ENCODE measurements at regions of chr16 and their contacts with region 1.

Region 1: GRCh38 chr16:64751906-64752305 is 370.0 kb downstream of the CDH11 start:
- DNase-seq: no peak
- H3K4me3 Mint-ChIP-seq: no peak overlapping the region
- H3K27ac Mint-ChIP-seq: no peak overlapping the region
- H3K4me1 Mint-ChIP-seq: no peaks in the 10 kb centered on the region
- H3K27me3 Mint-ChIP-seq: no peaks in the 10 kb centered on the region

Region 2: GRCh38 chr16:64773184-64773583 is 21.3 kb after region 1 on chr16:
- CTCF ChIA-PET with region 1: no interaction called
- POLR2A ChIA-PET with region 1: no interaction called
- intact Hi-C with region 1: no loop called
- DNase-seq: no peak
- H3K4me3 Mint-ChIP-seq: no peak overlapping the region
- H3K27ac Mint-ChIP-seq: no peak overlapping the region
- H3K4me1 Mint-ChIP-seq: no peaks in the 10 kb centered on the region
- H3K27me3 Mint-ChIP-seq: no peaks in the 10 kb centered on the region

Region 3: DNA sequence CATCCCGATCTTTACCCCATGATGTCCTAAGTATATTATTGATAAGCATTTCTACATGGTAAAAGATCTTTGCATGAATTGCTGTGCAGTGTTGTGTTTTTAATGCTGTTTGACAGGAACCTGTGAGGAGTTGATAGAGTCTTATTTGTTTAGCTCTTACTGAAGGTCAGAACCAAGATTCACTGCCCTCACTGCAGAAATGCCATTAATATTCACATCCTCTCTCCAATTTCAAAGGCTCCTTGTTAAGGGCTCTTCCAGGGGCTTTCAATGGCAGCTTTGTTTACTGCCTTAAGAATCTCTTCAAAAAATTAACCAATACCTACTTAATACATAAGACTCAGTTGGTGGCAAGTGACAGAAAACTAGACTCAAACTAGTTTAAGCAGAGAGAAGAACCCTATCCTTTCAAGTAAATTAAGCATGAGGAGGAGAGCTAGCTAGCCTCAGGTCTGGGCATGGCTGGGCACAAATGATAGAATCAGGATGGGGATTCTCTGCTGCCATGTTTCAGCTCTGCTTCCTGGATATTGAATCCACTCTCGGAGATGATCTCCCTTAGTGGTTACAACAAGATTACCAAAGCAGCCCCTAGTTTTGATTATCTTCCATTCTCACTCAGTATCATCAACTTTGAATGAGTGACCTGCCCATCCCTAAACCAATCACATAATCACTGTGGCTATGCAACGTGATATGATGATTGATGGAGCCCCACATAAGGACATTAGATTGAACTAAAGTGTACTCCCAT is 58.1 kb after region 1 on chr16:
- CTCF ChIA-PET with region 1: no interaction called
- POLR2A ChIA-PET with region 1: no interaction called
- intact Hi-C with region 1: loop called (anchors 10 kb)
- DNase-seq: no peak
- H3K4me3 Mint-ChIP-seq: no peak overlapping the region
- H3K27ac Mint-ChIP-seq: no peak overlapping the region
- H3K4me1 Mint-ChIP-seq: no peaks in the 10 kb centered on the region
- H3K27me3 Mint-ChIP-seq: no peaks in the 10 kb centered on the region

Measured in activated CD4-positive, alpha-beta memory T cell treated with anti-CD3 and anti-CD28 coated beads for 36 hours (primary cell).